ENCODE measurements at regions of chr17 and their contacts with region 1.

Region 1: GRCh38 chr17:17001874-17002520 is 30.1 kb upstream of the TNFRSF13B start:
- DNase-seq: peak; percentile 80 to 87
- ATAC-seq: peak; percentile 86 to 95 (median 89)
- H3K4me3 ChIP-seq: no peak overlapping the region
- H3K27ac ChIP-seq: no peak overlapping the region
- H3K4me1 ChIP-seq: peaks cover 3% of the 10 kb centered on the region
- H3K27me3 ChIP-seq: no peaks in the 10 kb centered on the region
- CTCF ChIP-seq: peak; percentile 97

Region 2: GRCh38 chr17:17125136-17126084 is 123.4 kb after region 1 on chr17:
- intact Hi-C with region 1: loop called in 1 of 2 experiments (anchors 10 kb)
- DNase-seq: peak in 1 of 2 donors; percentile 32
- ATAC-seq: no peak
- H3K4me3 ChIP-seq: no peak overlapping the region
- H3K27ac ChIP-seq: peak overlapping the region; percentile 36
- H3K4me1 ChIP-seq: peaks cover 85% of the 10 kb centered on the region
- H3K27me3 ChIP-seq: no peaks in the 10 kb centered on the region
- CTCF ChIP-seq: no peak

Region 3: GRCh38 chr17:17151962-17152361 is 150.0 kb after region 1 on chr17:
- intact Hi-C with region 1: loop called in 1 of 2 experiments (anchors 5 kb)
- DNase-seq: peak; percentile 95 to 97
- ATAC-seq: peak; percentile 93 to 96 (median 95)
- H3K4me3 ChIP-seq: no peak overlapping the region
- H3K27ac ChIP-seq: peak overlapping the region; percentile 90
- H3K4me1 ChIP-seq: peaks cover 37% of the 10 kb centered on the region
- H3K27me3 ChIP-seq: no peaks in the 10 kb centered on the region
- CTCF ChIP-seq: no peak

Region 4: DNA sequence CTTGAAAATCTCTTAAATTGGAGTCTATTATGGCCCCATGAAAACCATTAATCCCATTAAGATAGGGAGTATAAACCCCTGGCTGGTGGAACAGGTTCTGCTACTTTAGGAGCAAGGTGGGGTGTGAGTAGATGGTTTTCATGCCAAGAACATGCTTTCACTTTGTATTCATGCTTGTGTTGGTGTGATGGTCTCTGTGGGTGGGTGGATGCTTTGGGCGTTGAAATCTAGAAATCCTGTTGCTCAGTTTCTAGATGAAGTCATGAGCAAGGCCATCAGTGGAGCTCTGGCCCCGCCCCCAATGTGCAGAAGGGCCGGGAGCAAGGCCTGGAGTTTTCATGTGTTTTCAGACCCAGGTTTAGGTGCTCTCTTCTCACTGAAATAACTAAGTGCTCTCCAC is 184.1 kb after region 1 on chr17:
- intact Hi-C with region 1: loop called in 1 of 2 experiments (anchors 10 kb)
- DNase-seq: no peak
- ATAC-seq: no peak
- H3K4me3 ChIP-seq: no peak overlapping the region
- H3K27ac ChIP-seq: no peak overlapping the region
- H3K4me1 ChIP-seq: peaks cover 11% of the 10 kb centered on the region
- H3K27me3 ChIP-seq: no peaks in the 10 kb centered on the region
- CTCF ChIP-seq: no peak

Region 5: GRCh38 chr17:17313350-17313991 is 311.5 kb after region 1 on chr17:
- intact Hi-C with region 1: loop called in 1 of 2 experiments (anchors 5 kb)
- DNase-seq: peak in 1 of 2 donors; percentile 64
- ATAC-seq: peak; percentile 44 to 74 (median 67)
- H3K4me3 ChIP-seq: no peak overlapping the region
- H3K27ac ChIP-seq: no peak overlapping the region
- H3K4me1 ChIP-seq: no peaks in the 10 kb centered on the region
- H3K27me3 ChIP-seq: no peaks in the 10 kb centered on the region
- CTCF ChIP-seq: peak; percentile 44

Region 6: GRCh38 chr17:17322516-17323510 is 320.8 kb after region 1 on chr17:
- intact Hi-C with region 1: loop called in 1 of 2 experiments (anchors 5 kb)
- DNase-seq: no peak
- ATAC-seq: no peak
- H3K4me3 ChIP-seq: no peak overlapping the region
- H3K27ac ChIP-seq: no peak overlapping the region
- H3K4me1 ChIP-seq: peaks cover 6% of the 10 kb centered on the region
- H3K27me3 ChIP-seq: no peaks in the 10 kb centered on the region
- CTCF ChIP-seq: no peak

Region 7: GRCh38 chr17:17641621-17642409 is 639.8 kb after region 1 on chr17:
- intact Hi-C with region 1: loop called in 1 of 2 experiments (anchors 10 kb)
- DNase-seq: peak; percentile 78 to 82
- ATAC-seq: peak; percentile 81 to 95 (median 90)
- H3K4me3 ChIP-seq: no peak overlapping the region
- H3K27ac ChIP-seq: no peak overlapping the region
- H3K4me1 ChIP-seq: no peaks in the 10 kb centered on the region
- H3K27me3 ChIP-seq: no peaks in the 10 kb centered on the region
- CTCF ChIP-seq: peak; percentile 91

Measured in psoas muscle (tissue), 8 donors.